Uterus (tissue), 4 donors: ENCODE measurements at regions of chr5 and their contacts with region 1.

Region 1: DNA sequence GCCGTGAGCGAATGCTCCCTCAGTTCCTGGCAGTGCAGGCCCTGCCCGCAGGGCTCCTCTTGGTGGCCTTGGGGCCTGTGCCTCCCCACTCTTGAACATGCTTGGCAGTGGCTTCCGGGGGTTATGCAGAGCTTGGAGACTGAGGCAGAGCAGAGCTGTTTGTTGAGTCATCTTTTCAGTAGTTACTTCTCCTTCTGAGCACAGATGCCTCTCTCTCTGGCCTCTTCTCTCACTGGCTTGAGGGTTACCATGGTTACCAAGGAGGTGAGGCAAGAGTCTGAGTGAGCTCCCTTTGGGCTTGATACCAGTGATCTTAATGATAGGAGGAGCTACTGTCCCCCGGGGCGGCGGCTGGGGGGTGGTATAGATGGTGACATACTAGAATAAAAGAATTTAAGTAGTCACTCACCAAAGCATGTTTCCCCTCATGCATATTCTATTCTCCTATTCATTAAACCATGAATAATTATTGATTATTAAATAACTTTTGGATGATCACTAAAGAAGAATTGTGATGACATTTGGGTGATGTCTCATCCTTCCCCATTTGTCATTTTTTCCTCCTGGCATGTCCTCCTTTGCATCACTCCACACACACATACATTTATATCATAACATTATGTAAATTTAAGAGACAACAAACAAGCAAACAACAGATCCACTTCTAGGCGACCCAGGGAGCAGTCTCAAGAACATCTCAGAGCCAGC is 111.1 kb downstream of the ARHGAP26 start:
- DNase-seq: no peak
- H3K4me3 ChIP-seq: no peak overlapping the region
- H3K27ac ChIP-seq: no peak overlapping the region
- H3K4me1 ChIP-seq: no peaks in the 10 kb centered on the region
- H3K27me3 ChIP-seq: no peaks in the 10 kb centered on the region
- CTCF ChIP-seq: no peak
- POLR2A ChIP-seq: no peak

Region 2: DNA sequence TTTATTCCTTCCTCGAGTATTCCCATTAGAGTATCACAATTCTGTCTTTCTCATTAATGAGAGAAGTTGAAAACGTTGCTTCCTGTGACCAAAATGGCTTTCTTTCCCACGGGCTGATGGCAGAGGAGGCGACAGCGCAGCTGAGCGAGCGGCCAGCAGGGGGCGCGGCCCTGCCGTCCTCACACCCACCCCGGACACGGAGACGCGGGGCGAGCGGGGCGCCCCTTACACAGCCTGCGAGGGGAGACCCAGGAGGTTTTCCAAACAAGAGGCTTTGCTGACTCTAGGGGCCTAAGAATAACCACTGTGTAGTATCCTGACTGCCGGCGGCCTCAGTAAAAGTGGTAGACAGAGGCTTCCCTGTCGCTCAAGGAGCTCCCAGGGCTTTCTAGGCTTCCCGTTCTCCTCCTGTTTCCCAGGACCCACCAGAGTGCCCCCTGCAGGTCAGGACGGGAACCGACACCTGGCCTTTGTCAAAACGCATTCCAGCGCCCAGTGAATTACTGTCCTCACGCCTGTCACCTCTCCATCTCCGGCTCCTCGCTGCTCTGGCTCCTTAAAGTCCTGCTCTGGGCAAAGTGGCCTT is 168.0 kb before region 1 on chr5:
- intact Hi-C with region 1: loop called (anchors 5 kb)
- DNase-seq: peak; percentile 83 to 84
- H3K4me3 ChIP-seq: peak overlapping the region; percentile 26 to 53
- H3K27ac ChIP-seq: peak overlapping the region; percentile 86 to 89
- H3K4me1 ChIP-seq: no peaks in the 10 kb centered on the region
- H3K27me3 ChIP-seq: no peaks in the 10 kb centered on the region
- CTCF ChIP-seq: peak; percentile 83 to 99 (median 92)
- POLR2A ChIP-seq: no peak